ENCODE measurements at regions of chr17 and their contacts with region 1.

Region 1: GRCh38 chr17:5419356-5419958 is at the start of gene NUP88:
- DNase-seq: peak; percentile 91 to 98
- H3K4me3 ChIP-seq: peak within 1 kb of the TSS; percentile 68 to 84
- H3K27ac ChIP-seq: peak within 1 kb of the TSS; percentile 78 to 82
- H3K4me1 ChIP-seq: peaks cover 4 to 20% of the 10 kb centered on the region in 2 donors
- H3K27me3 ChIP-seq: no peaks in the 10 kb centered on the region
- CTCF ChIP-seq: no peak
- total RNA-seq, gene NUP88: 102 TPM

Region 2: GRCh38 chr17:4920351-4921048 is 499.0 kb before region 1 on chr17:
- intact Hi-C with region 1: no loop called
- DNase-seq: no peak
- H3K4me3 ChIP-seq: no peak overlapping the region
- H3K27ac ChIP-seq: no peak overlapping the region
- H3K4me1 ChIP-seq: no peaks in the 10 kb centered on the region
- H3K27me3 ChIP-seq: no peaks in the 10 kb centered on the region
- CTCF ChIP-seq: no peak

Region 3: DNA sequence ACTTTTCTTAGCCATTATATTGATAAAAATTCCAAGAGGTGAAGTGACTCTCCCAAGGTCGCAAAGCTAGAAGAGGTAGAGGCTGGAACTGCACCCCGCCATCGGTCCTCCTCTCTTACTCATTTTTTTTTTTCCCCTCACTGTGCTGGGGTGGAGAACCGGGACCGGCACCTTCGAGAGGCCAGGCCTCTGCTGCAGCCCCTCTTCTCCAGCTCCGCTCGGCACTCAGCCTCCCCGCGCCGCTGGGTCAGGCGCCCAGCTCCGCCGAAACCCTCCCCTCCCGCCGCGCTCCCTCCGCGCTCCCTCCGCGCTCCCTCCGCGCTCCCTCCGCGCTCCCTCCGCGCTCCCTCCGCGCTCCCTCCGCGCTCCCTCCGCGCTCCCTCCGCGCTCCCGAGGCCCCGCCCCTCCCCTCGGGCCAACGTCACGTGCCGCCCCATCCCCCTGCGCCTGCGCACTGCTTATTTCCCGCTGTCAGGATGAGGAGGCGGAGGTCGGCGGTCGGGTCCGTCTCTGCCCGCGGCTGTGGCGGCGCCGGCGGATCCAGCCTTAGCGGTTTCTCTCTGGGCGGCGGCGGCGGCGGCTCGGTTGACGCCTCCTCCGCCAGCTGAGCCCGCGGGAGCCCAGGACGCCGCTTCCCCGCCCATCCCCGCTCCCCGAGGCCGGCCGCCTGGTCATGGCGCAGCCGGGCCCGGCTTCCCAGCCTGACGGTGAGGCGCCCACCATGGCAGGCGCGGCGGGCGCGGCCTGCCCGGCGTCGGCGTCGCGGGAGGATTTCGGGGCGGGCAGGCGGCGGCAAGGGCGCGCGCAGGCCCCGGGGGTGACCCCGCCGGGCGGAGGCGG is 137.4 kb before region 1 on chr17 and contains the start of gene RABEP1:
- intact Hi-C with region 1: loop called (anchors 2 kb)
- DNase-seq: peak; percentile 35 to 91
- H3K4me3 ChIP-seq: peak within 1 kb of the TSS; percentile 94 to 99
- H3K27ac ChIP-seq: peak within 1 kb of the TSS; percentile 87 to 99
- H3K4me1 ChIP-seq: peaks cover 0 to 18% of the 10 kb centered on the region in 2 donors
- H3K27me3 ChIP-seq: no peaks in the 10 kb centered on the region
- CTCF ChIP-seq: peak in 2 of 3 experiments; percentile 7 to 10
- total RNA-seq, gene RABEP1: 9.3 TPM

Region 4: GRCh38 chr17:5468075-5468473 is 48.6 kb after region 1 on chr17:
- intact Hi-C with region 1: loop called (anchors 5 kb)
- DNase-seq: no peak
- H3K4me3 ChIP-seq: peak overlapping the region; percentile 59 to 85
- H3K27ac ChIP-seq: peak overlapping the region in 1 of 2 donors; percentile 71
- H3K4me1 ChIP-seq: peaks cover 2 to 9% of the 10 kb centered on the region in 2 donors
- H3K27me3 ChIP-seq: no peaks in the 10 kb centered on the region
- CTCF ChIP-seq: no peak

Measured in ascending aorta (tissue), 2 donors.